ENCODE measurements at regions of chr2 and their contacts with region 1.

Region 1: GRCh38 chr2:224847961-224848850 is 132.0 kb upstream of the CCDC195 start:
- DNase-seq: no peak
- ATAC-seq: no peak
- H3K4me3 ChIP-seq: no peak overlapping the region
- H3K27ac ChIP-seq: no peak overlapping the region
- H3K4me1 ChIP-seq: no peaks in the 10 kb centered on the region
- H3K27me3 ChIP-seq: no peaks in the 10 kb centered on the region
- CTCF ChIP-seq: no peak

Region 2: DNA sequence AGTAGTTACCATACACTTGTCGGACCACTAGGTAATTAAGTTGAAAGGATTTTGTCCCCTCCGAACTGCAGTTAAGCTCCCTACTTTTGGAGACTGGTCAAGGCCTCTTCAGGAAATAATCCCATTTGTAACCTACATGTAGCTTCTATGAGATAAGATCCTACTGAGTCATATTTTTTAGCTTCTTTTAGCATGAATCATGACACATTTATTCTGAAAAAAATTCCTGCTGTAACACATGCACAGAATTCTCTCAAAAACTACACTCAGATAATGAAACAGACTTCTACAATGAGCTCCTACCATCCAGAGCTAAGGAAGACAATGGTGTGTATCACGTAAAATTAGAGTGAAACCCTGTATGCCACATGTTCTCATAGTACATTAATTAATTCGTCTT is 31.4 kb before region 1 on chr2:
- CTCF ChIA-PET with region 1: interaction called, 10 read pairs
- POLR2A ChIA-PET with region 1: no interaction called
- in situ Hi-C with region 1: no loop called
- intact Hi-C with region 1: no loop called
- DNase-seq: peak; percentile 65
- ATAC-seq: peak; percentile 82
- H3K4me3 ChIP-seq: no peak overlapping the region
- H3K27ac ChIP-seq: peak overlapping the region; percentile 45; the same call in 1 of the 2 replicates
- H3K4me1 ChIP-seq: peaks cover 16% of the 10 kb centered on the region
- H3K27me3 ChIP-seq: no peaks in the 10 kb centered on the region
- CTCF ChIP-seq: no peak